Adrenal gland (tissue), 19 donors: ENCODE measurements at regions of chr3 and their contacts with region 1.

Region 1: GRCh38 chr3:107753480-107753879 is 230.7 kb downstream of the BBX start:
- DNase-seq: peak; percentile 39 to 75 (median 52)
- H3K4me3 ChIP-seq: no peak overlapping the region
- H3K27ac ChIP-seq: no peak overlapping the region
- H3K4me1 ChIP-seq: peaks cover 0 to 8% of the 10 kb centered on the region in 2 donors
- H3K27me3 ChIP-seq: no peaks in the 10 kb centered on the region
- CTCF ChIP-seq: peak; percentile 39 to 69 (median 62)
- POLR2A ChIP-seq: no peak

Region 2: DNA sequence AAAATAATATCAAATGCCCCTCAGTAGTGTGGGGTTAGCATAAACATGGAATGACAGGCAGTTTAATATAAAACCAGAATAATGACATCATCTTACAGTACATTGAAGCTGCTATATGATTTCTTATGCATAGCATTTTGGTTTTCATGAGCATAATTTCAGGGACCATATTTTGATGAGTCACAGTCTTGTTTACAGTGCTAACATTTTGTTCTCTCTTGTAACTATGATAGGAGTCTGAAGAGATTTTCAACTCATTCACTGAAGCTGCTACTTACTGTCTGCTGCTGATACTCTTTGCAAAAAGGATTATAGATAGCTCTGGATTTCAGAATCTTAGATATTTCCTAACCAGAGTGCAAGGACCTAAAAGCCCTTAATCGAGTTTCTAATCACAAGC is 468.9 kb before region 1 on chr3:
- intact Hi-C with region 1: no loop called
- DNase-seq: no peak
- H3K4me3 ChIP-seq: no peak overlapping the region
- H3K27ac ChIP-seq: peak overlapping the region in 1 of 5 donors; percentile 1
- H3K4me1 ChIP-seq: no peaks in the 10 kb centered on the region
- H3K27me3 ChIP-seq: no peaks in the 10 kb centered on the region
- CTCF ChIP-seq: no peak
- POLR2A ChIP-seq: no peak

Region 3: DNA sequence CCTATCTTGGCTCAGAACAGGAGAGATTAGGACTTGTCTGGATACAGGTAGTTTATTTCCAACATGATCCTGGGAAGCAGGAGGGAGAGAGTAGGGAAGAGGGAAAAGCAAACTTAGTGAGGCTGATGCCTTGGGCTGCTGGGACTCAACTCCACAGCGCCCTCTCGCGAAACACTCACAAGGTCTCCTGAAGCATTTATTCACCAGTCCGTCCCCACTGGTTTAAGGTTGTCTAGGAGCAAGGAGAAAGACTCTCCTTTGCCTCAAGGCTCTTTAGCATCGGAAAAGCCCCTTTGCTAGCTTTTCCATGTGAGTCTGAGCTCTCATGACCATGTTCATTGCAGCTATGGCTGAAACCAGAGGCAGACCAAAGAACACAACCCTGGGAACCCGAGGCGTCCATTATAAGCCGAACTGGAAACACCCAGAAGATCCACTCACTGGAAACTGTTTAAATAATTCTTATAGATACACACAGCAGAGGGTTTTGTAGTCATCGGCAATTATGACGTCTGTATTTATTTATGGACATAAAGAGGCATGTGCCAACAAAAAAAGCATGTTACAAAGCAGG is 92.9 kb after region 1 on chr3:
- intact Hi-C with region 1: loop called in 1 of 2 experiments (anchors 10 kb)
- DNase-seq: peak; percentile 58 to 88 (median 81)
- H3K4me3 ChIP-seq: no peak overlapping the region
- H3K27ac ChIP-seq: no peak overlapping the region
- H3K4me1 ChIP-seq: peaks cover 0 to 5% of the 10 kb centered on the region in 2 donors
- H3K27me3 ChIP-seq: no peaks in the 10 kb centered on the region
- CTCF ChIP-seq: peak; percentile 42 to 73 (median 64)
- POLR2A ChIP-seq: no peak

Region 4: DNA sequence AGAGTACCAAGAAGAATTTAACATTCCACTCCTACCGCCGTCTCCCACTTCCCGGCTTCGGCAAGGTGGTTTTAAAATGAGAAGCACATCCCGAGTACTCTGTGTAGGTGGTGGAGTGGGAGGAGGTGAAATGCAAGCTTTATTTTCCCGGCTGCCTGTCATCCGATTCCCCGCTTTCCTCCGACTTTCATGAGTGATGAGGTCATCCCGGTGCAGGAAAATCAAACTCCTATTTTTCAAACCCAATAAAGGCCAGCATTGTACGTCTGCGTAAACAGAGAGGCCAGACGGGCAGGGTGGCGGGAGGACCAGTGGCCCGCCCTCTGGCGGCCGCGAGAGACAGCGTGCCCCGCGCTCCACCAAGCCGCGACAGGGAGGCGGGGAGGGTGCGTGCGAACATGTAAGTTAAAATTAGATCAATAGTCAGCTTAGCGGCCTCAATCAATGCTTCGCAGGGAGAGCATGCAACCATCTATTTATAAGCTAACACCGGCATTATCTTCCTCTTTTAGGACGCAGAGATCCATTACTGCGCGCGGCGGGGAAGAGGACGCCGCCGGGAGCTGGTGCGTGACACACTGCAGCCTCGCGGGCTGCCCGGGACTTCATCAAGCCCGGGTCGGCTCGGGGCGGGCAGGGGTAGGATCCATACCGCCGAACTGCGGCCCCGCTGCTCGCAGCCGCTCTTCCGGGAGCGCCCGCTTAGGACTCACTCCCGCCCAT is 174.0 kb after region 1 on chr3:
- intact Hi-C with region 1: loop called in 1 of 2 experiments (anchors 10 kb)
- DNase-seq: peak; percentile 76 to 87 (median 79)
- H3K4me3 ChIP-seq: peak overlapping the region in 3 of 4 donors; percentile 45 to 73 (median 57)
- H3K27ac ChIP-seq: peak overlapping the region in 3 of 5 donors; percentile 11 to 56 (median 26)
- H3K4me1 ChIP-seq: peaks cover 0 to 4% of the 10 kb centered on the region in 2 donors
- H3K27me3 ChIP-seq: no peaks in the 10 kb centered on the region
- CTCF ChIP-seq: peak; percentile 80 to 92 (median 90)
- POLR2A ChIP-seq: peak in 1 of 2 donors; percentile 20